PC-3 (cell line): ENCODE measurements at regions of chr9 and their contacts with region 1.

Region 1: GRCh38 chr9:124639637-124640036 is 131.5 kb downstream of the NR6A1 start:
- DNase-seq: no peak
- ATAC-seq: no peak
- H3K4me3 ChIP-seq: no peak overlapping the region
- H3K27ac ChIP-seq: no peak overlapping the region
- H3K4me1 ChIP-seq: no peaks in the 10 kb centered on the region
- H3K27me3 ChIP-seq: no peaks in the 10 kb centered on the region
- CTCF ChIP-seq: no peak

Region 2: DNA sequence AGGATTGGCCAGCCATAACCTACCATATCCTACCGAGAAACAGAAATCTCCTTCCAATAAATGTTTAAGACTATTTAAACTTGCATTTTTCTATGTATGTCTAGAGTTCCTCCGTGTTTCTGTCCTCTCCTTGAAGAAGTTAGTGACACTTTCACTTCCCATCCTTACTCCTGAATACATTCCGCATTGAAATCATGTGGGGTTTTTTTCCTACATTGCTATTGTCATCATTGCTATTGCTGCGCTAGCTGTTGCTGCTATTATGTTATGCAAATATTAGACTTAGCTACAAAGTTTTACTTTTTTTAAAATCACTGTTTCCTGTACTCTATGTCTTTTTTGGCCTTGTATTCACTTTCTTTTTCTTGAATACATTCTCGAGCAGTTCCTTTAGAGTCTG is 465.2 kb before region 1 on chr9:
- CTCF ChIA-PET with region 1: no interaction called
- POLR2A ChIA-PET with region 1: no interaction called
- intact Hi-C with region 1: no loop called
- DNase-seq: no peak
- ATAC-seq: no peak
- H3K4me3 ChIP-seq: no peak overlapping the region
- H3K27ac ChIP-seq: no peak overlapping the region
- H3K4me1 ChIP-seq: no peaks in the 10 kb centered on the region
- H3K27me3 ChIP-seq: peaks cover 33% of the 10 kb centered on the region
- CTCF ChIP-seq: no peak

Region 3: DNA sequence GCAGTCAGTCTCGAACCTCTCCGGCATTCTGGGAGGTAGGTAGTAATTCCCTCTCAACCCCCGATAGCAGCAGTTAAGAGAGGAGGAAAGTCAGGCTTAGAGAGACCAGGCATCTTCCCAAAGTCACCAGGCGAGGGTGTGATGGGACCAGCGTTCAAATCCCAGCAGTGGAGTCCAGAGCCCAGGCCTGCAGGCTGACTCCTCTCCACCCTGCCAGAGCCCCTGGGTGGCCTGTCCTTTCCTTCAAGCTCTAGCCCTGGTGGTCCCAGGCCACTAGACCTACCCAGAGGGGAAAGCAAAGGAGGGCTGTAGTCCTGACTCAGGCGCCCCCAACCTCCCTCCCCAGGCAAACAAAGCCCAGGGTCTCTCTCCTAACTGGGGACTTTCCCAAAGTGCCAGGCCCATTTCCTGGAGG is 128.2 kb before region 1 on chr9:
- CTCF ChIA-PET with region 1: no interaction called
- POLR2A ChIA-PET with region 1: no interaction called
- intact Hi-C with region 1: no loop called
- DNase-seq: no peak
- ATAC-seq: no peak
- H3K4me3 ChIP-seq: no peak overlapping the region
- H3K27ac ChIP-seq: no peak overlapping the region
- H3K4me1 ChIP-seq: no peaks in the 10 kb centered on the region
- H3K27me3 ChIP-seq: no peaks in the 10 kb centered on the region
- CTCF ChIP-seq: no peak

Region 4: GRCh38 chr9:124629600-124629999 is 10.0 kb before region 1 on chr9:
- CTCF ChIA-PET with region 1: no interaction called
- POLR2A ChIA-PET with region 1: interaction called, 17 read pairs
- intact Hi-C with region 1: no loop called
- DNase-seq: peak; percentile 67
- ATAC-seq: peak; percentile 87
- H3K4me3 ChIP-seq: no peak overlapping the region
- H3K27ac ChIP-seq: no peak overlapping the region
- H3K4me1 ChIP-seq: peaks cover 6% of the 10 kb centered on the region; the same call in 1 of the 2 replicates
- H3K27me3 ChIP-seq: no peaks in the 10 kb centered on the region
- CTCF ChIP-seq: no peak